ENCODE measurements at regions of chr2 and their contacts with region 1.

Region 1: GRCh38 chr2:47437287-47437686 is 34.3 kb downstream of the MSH2 start:
- DNase-seq: no peak
- H3K4me3 ChIP-seq: no peak overlapping the region
- H3K27ac ChIP-seq: no peak overlapping the region
- H3K4me1 ChIP-seq: no peaks in the 10 kb centered on the region
- H3K27me3 ChIP-seq: no peaks in the 10 kb centered on the region
- CTCF ChIP-seq: peak; percentile 68

Region 2: GRCh38 chr2:47155091-47155876 is 282.0 kb before region 1 on chr2 and contains the start of gene STPG4:
- CTCF ChIA-PET with region 1: no interaction called
- POLR2A ChIA-PET with region 1: no interaction called
- intact Hi-C with region 1: no loop called
- DNase-seq: peak in 1 of 2 experiments; percentile 25
- H3K4me3 ChIP-seq: no peak within 1 kb of the TSS
- H3K27ac ChIP-seq: peak within 1 kb of the TSS; percentile 48
- H3K4me1 ChIP-seq: no peaks in the 10 kb centered on the region; the same call in 1 of the 2 replicates
- H3K27me3 ChIP-seq: no peaks in the 10 kb centered on the region
- CTCF ChIP-seq: no peak
- total RNA-seq, gene STPG4: 6.5 and 8.7 TPM in 2 replicates

Region 3: DNA sequence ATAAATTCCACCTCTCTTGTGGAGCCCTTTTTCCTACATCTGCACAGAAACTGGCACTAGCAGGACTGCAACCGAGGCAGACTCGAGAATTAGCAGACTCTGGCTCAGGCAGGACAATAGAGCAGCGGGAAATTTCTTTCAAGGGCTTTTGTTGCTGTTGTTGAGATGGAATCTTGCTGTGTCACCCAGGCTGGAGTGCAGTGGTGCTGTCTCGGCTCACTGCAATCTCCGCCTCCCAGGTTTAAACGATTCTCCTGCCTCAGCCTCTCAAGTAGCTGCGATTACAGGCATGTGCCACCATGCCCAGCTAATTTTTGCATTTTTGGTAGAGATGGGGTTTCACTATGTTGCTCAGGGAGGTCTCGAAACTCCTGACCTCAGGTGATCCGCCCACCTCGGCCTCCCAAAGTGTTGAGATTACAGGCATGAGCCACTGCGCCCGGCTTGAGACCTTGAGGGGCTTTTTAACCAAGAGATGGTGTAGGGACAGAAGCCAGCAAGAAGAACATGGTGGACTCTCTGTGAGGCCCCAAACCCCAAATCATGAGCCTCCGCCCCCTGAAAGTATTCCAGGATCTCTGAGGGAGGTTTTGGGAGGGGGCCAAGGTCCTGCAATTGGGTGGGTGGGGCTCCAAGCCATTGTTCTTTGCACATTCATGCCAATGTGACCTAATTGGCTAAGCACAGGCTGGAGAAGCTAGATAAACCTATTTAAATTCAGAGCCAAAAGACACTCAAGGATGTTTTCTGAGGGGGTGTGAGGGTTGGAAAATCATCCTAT is 102.7 kb before region 1 on chr2:
- CTCF ChIA-PET with region 1: interaction called, 21 read pairs
- POLR2A ChIA-PET with region 1: no interaction called
- intact Hi-C with region 1: no loop called
- DNase-seq: no peak
- H3K4me3 ChIP-seq: no peak overlapping the region
- H3K27ac ChIP-seq: no peak overlapping the region
- H3K4me1 ChIP-seq: peaks cover 13% of the 10 kb centered on the region
- H3K27me3 ChIP-seq: no peaks in the 10 kb centered on the region
- CTCF ChIP-seq: no peak

Region 4: DNA sequence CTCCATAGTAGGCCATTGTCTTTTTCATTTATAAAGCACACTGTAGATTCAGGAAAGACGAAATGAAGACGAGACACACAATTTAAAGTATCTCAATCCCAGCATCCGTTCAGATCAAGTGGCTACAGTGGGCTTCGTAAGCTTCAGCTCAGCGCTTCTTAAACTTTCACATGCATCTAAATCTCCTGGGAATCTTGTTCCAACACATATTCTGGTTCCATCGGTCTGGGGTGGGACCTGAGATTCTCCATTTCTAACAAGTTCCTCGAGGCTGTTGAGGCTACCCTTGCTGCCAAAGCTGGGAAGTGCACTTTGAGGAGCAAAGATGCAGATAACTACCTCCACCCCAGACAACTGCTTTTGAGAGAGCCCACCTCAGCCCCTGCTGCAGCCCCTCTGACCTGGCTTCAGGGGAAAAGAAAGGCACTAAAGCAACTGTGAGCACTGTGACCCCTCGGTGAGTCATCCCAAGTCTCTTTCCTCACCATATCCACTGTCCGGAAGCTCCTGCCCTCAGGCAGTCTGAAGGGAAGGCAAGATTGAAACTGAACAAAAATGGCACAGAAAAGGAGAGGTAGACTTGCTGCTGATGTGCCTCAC is 670.1 kb after region 1 on chr2:
- CTCF ChIA-PET with region 1: interaction called, 4 read pairs
- POLR2A ChIA-PET with region 1: interaction called, 4 read pairs
- intact Hi-C with region 1: loop called (anchors 5 kb)
- DNase-seq: peak; percentile 64 to 73
- H3K4me3 ChIP-seq: no peak overlapping the region
- H3K27ac ChIP-seq: peak overlapping the region; percentile 71
- H3K4me1 ChIP-seq: peaks cover 53% of the 10 kb centered on the region
- H3K27me3 ChIP-seq: no peaks in the 10 kb centered on the region
- CTCF ChIP-seq: no peak